Ascending aorta (tissue), 2 donors: ENCODE measurements at regions of chr7 and their contacts with region 1.

Region 1: DNA sequence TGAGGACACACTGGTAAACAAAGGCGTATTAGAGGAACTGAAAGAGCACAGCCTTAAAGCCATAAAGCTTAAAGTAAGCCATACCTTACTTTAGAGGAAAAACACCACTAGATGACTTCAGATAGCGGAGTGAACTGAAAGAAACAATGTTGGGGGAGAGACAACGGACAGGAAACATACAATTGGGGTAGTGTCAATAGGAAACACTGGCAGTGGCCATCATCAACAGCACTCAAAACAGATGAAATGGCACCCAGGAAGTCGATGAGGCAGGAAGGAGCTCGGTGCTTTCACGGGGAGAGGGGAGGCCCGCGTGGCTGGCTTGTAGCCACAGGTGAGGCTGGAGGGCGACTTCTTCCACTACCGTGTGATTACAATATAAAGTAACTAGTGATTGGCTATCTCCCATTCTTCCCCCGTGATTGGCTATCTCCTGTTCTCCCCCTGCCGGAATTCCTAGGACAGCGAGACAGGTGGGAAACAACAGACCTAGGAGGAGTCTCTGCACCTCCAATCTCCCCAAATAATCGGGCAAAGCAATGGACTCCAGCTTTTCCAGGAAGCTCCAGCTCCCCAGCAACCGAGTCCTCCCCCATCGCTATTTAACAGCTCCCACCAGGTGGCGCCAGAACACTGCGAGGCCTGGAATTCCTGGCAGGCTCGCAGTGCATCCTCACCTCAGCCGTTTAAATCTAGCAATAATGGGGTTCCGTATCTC is 2.4 kb upstream of the TAS2R38 start:
- DNase-seq: peak in 1 of 2 donors; percentile 75
- H3K4me3 ChIP-seq: peak overlapping the region; percentile 6 to 49
- H3K27ac ChIP-seq: no peak overlapping the region
- H3K4me1 ChIP-seq: no peaks in the 10 kb centered on the region
- H3K27me3 ChIP-seq: no peaks in the 10 kb centered on the region
- CTCF ChIP-seq: peak; percentile 58 to 92 (median 78)

Region 2: DNA sequence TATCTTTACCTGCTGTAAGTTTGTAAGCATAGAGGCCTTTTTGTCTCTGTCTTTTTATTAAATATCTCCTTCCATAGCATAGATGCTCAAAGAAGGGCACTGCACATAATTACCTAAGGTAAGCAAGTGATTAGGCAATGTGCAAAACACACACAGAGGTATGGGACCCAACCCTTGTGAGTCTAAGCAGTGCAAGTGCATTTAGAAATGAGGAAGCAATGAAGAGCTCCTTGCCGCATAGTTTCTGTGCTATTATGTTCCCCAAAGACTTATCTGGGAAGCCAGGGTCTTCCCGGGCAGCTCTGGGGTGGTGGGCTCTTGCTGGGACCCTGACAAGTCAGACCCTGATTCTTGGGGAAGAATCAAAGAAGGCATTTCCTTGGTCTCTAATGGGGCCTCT is 122.0 kb after region 1 on chr7:
- intact Hi-C with region 1: loop called (anchors 10 kb)
- DNase-seq: no peak
- H3K4me3 ChIP-seq: no peak overlapping the region
- H3K27ac ChIP-seq: no peak overlapping the region
- H3K4me1 ChIP-seq: no peaks in the 10 kb centered on the region
- H3K27me3 ChIP-seq: no peaks in the 10 kb centered on the region
- CTCF ChIP-seq: no peak

Region 3: DNA sequence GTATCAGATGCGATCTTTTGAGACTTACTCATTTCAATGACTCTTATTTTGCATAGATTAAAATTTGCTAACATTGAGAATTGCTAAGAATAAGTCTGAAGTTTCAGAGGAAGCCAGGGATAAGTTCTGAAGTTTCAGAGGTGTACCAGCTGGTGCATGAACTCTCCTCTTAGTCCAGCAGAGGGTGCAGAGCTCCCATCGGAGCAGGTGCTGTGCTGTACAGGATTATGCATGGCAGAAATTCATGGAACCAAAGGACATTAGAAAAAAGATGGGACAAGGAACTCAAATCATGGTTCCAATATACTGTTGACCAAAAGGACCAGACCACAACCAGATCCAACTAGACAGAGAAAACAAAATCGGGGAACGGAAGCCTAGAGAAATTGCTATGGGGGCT is 177.4 kb after region 1 on chr7:
- intact Hi-C with region 1: no loop called
- DNase-seq: no peak
- H3K4me3 ChIP-seq: no peak overlapping the region
- H3K27ac ChIP-seq: no peak overlapping the region
- H3K4me1 ChIP-seq: no peaks in the 10 kb centered on the region
- H3K27me3 ChIP-seq: no peaks in the 10 kb centered on the region
- CTCF ChIP-seq: peak in 1 of 3 experiments; percentile 6

Region 4: GRCh38 chr7:142188846-142189245 is 212.9 kb after region 1 on chr7:
- intact Hi-C with region 1: loop called (anchors 1 kb)
- DNase-seq: no peak
- H3K4me3 ChIP-seq: no peak overlapping the region
- H3K27ac ChIP-seq: no peak overlapping the region
- H3K4me1 ChIP-seq: no peaks in the 10 kb centered on the region
- H3K27me3 ChIP-seq: no peaks in the 10 kb centered on the region
- CTCF ChIP-seq: peak in 2 of 3 experiments; percentile 10 to 43